Vagina (tissue), 2 donors: ENCODE measurements at regions of chr3 and their contacts with region 1.

Region 1: GRCh38 chr3:23068016-23068728 is 135.0 kb upstream of the UBE2E2 start:
- DNase-seq: no peak
- H3K4me3 ChIP-seq: no peak overlapping the region
- H3K27ac ChIP-seq: no peak overlapping the region
- H3K4me1 ChIP-seq: no peaks in the 10 kb centered on the region
- H3K27me3 ChIP-seq: no peaks in the 10 kb centered on the region
- CTCF ChIP-seq: no peak
- POLR2A ChIP-seq: no peak

Region 2: DNA sequence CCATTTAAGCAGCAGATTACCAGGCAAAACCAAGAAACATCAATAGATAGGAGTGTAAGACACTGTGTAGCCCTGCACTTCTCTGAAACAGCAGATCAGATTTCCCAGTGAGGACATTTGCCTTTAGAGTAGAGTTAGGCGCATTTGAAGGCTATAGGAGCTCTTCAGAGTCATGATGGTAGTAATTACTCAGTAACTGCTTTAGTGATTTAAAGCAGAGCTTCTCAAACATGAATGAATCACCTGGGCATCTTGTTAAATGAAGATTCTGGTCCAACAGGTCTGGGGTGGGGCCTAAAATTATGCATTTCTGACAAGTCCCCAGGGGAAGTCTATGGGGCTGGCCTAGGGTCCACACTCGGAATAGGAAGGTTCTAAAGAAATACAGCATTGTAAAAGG is 1389.6 kb after region 1 on chr3:
- intact Hi-C with region 1: loop called (anchors 5 kb)
- DNase-seq: no peak
- H3K4me3 ChIP-seq: no peak overlapping the region
- H3K27ac ChIP-seq: no peak overlapping the region
- H3K4me1 ChIP-seq: peaks cover 5% of the 10 kb centered on the region
- H3K27me3 ChIP-seq: no peaks in the 10 kb centered on the region
- CTCF ChIP-seq: no peak
- POLR2A ChIP-seq: no peak